Heart left ventricle (tissue), 16 donors: ENCODE measurements at regions of chr3 and their contacts with region 1.

Region 1: DNA sequence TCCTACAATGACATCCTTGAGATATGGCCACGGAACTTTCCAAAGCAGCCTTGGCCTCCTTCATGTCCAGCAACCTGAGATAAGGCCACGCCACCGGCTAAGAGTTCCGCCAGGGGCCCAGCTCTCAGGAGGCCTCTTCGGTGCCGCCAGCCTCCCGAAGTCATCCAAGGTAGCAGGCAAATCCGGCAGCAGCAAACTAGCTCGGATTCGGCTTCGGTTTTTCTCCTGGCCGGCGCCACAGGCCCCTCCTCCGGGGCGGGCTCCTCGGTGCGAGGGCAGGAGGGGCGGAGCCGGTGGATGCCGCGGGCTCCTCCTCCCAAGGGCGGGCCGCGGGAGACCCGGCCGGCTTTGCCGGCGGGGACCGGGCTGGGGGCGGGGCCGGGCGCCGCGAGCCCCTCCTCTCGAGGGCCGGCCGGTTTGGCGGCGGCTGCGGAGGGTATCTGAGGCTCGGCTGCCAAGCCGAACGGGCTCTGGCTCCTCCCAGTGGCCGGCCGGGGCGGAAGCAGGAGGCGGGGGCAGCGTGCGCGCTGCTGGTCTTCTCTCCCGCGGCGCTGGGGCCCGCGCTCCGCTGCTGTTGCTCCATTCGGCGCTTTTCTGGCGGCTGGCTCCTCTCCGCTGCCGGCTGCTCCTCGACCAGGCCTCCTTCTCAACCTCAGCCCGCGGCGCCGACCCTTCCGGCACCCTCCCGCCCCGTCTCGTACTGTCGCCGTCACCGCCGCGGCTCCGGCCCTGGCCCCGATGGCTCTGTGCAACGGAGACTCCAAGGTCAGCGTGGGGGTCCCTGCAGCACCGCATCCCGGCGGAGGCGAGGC is at the start of gene GMPS:
- DNase-seq: peak; percentile 94 to 98 (median 96)
- ATAC-seq: peak; percentile 97 to 99 (median 98)
- H3K4me3 ChIP-seq: peak within 1 kb of the TSS; percentile 71 to 100 (median 96)
- H3K27ac ChIP-seq: peak within 1 kb of the TSS; percentile 52 to 99 (median 94)
- H3K4me1 ChIP-seq: peaks cover 0 to 33% (median 18%) of the 10 kb centered on the region in 12 donors
- H3K27me3 ChIP-seq: no peaks in the 10 kb centered on the region
- CTCF ChIP-seq: peak; percentile 41 to 79 (median 57)
- POLR2A ChIP-seq: peak in 1 of 2 donors; percentile 75
- total RNA-seq, gene GMPS: 21.4 to 36.8 (median 32.3) TPM

Region 2: DNA sequence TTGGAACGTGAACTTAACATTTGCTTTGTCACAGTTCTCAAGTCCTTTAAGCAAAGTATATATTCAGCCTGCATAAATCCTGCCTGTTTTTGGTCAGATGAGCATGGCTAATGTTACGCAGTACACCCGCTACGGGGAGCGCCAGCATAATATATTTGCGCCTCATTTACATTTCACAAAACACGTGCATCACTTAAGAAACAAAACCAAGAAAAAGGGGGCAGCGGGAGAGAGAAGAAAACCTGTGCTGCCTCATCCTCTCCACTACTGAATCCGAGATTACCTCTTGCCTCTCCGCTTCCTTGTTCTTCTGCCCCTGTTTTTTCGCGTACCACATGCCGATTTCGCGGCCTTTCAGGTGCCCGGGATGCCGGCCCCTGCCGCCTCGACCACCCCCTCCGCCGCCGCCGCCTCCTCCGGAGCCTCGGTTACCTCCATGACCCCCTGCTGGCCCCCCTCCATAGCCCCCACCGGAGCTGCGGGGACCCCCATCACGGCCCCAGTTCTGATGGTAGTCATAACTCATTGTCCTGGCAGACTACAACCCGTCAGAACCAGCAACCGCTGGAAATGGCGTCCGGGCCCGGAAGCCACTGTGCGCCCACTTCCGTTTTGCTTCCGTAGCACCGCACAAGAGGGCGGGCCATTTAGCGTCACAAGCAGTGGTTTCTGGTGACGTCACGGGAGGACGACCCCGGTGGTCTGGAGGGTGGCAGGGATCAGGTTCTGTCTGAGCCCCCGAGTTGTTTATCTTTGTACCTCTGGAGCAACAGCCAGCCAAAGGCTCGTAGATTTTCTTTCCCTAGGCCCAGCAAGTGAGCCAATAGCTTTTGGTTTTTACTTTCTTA is 1546.2 kb before region 1 on chr3 and contains the start of gene DHX36:
- intact Hi-C with region 1: loop called in 1 of 10 experiments (anchors 10 kb)
- DNase-seq: peak; percentile 90 to 93 (median 90)
- ATAC-seq: peak; percentile 92 to 99 (median 98)
- H3K4me3 ChIP-seq: peak within 1 kb of the TSS; percentile 64 to 94 (median 79)
- H3K27ac ChIP-seq: peak within 1 kb of the TSS; percentile 77 to 96 (median 86)
- H3K4me1 ChIP-seq: peaks cover 0 to 51% (median 35%) of the 10 kb centered on the region in 12 donors
- H3K27me3 ChIP-seq: no peaks in the 10 kb centered on the region
- CTCF ChIP-seq: peak in 2 of 12 donors; percentile 9 to 10
- POLR2A ChIP-seq: peak in 1 of 2 donors; percentile 59
- total RNA-seq, gene DHX36: 24.9 to 50.0 (median 37.0) TPM

Region 3: DNA sequence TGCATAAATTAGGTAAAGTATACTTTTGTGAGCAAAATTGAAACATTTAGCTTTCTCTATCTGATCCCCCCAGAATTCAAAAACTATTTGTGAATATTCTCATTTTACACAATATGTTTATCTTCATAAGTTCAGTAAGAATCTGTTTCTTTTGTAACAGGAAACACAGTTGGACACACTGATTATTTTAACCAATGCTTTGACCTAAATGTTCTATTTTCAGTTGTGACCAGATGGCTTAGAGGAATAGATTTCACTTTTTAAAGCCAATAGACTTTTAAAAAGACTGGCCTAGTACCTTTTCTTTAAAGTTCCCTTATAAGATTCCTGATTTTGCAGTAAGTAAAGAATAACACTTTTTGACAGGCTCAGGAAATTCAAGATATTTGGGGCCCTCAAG is 502.8 kb before region 1 on chr3:
- intact Hi-C with region 1: loop called in 1 of 10 experiments (anchors 5 kb)
- DNase-seq: no peak
- ATAC-seq: no peak
- H3K4me3 ChIP-seq: no peak overlapping the region
- H3K27ac ChIP-seq: peak overlapping the region in 7 of 12 donors; percentile 8 to 73 (median 42)
- H3K4me1 ChIP-seq: peaks cover 0 to 54% (median 18%) of the 10 kb centered on the region in 12 donors
- H3K27me3 ChIP-seq: no peaks in the 10 kb centered on the region
- CTCF ChIP-seq: no peak
- POLR2A ChIP-seq: no peak

Region 4: DNA sequence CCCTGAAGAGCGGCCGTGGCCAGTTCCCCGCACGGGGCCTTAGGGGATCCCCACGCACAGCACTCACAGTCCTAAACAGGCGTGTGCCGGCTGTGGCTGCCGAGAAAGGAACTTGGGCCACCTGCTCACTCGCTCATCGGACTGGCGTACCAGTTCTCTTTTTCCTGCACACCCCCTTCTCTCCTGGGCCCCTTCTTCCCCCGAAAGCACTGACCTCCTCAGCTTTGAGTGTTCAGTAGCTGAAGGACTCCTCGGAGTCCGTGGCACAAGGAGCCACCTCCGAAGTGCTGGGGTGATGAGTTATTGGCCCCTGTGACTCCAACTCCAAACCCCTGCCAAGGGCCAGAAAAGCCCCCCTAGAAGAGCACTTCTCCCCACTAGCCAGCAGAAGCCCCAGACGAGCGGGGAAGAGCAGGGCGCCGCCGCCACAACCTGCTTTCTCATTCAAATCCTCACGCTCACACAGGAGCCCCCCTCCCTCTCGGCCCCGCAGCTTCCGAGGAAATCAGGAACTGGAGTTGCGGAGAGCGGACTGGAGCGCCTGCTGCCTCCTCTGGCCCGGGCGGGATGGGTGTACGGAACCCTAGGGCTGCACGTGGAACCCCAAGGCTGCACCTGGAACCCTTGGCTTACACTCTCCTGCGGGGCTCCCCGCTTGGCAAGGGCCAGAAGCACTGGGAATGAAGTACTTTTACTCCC is 125.6 kb before region 1 on chr3 and contains the start of gene PLCH1:
- intact Hi-C with region 1: loop called in 1 of 10 experiments (anchors 10 kb)
- DNase-seq: peak; percentile 47 to 72 (median 53)
- ATAC-seq: peak; percentile 79 to 92 (median 89)
- H3K4me3 ChIP-seq: peak within 1 kb of the TSS; percentile 37 to 77 (median 62)
- H3K27ac ChIP-seq: no peak within 1 kb of the TSS
- H3K4me1 ChIP-seq: peaks cover 0 to 29% (median 5%) of the 10 kb centered on the region in 12 donors
- H3K27me3 ChIP-seq: peaks cover 5 to 47% (median 16%) of the 10 kb centered on the region in 9 donors
- CTCF ChIP-seq: no peak
- POLR2A ChIP-seq: no peak
- total RNA-seq, gene PLCH1: 0.09 to 2.7 (median 0.24) TPM

Region 5: GRCh38 chr3:155805802-155806618 is 64.3 kb before region 1 on chr3 and contains the start of gene C3orf33:
- intact Hi-C with region 1: loop called in 5 of 10 experiments (anchors 1 to 5 kb)
- DNase-seq: peak; percentile 69 to 90 (median 77)
- ATAC-seq: peak; percentile 89 to 98 (median 96)
- H3K4me3 ChIP-seq: peak within 1 kb of the TSS; percentile 71 to 87 (median 78)
- H3K27ac ChIP-seq: peak within 1 kb of the TSS; percentile 72 to 93 (median 88)
- H3K4me1 ChIP-seq: peaks cover 0 to 21% (median 5%) of the 10 kb centered on the region in 12 donors
- H3K27me3 ChIP-seq: no peaks in the 10 kb centered on the region
- CTCF ChIP-seq: peak; percentile 81 to 97 (median 90)
- POLR2A ChIP-seq: no peak
- total RNA-seq, gene C3orf33: 3.4 to 8.8 (median 5.8) TPM

Region 6: DNA sequence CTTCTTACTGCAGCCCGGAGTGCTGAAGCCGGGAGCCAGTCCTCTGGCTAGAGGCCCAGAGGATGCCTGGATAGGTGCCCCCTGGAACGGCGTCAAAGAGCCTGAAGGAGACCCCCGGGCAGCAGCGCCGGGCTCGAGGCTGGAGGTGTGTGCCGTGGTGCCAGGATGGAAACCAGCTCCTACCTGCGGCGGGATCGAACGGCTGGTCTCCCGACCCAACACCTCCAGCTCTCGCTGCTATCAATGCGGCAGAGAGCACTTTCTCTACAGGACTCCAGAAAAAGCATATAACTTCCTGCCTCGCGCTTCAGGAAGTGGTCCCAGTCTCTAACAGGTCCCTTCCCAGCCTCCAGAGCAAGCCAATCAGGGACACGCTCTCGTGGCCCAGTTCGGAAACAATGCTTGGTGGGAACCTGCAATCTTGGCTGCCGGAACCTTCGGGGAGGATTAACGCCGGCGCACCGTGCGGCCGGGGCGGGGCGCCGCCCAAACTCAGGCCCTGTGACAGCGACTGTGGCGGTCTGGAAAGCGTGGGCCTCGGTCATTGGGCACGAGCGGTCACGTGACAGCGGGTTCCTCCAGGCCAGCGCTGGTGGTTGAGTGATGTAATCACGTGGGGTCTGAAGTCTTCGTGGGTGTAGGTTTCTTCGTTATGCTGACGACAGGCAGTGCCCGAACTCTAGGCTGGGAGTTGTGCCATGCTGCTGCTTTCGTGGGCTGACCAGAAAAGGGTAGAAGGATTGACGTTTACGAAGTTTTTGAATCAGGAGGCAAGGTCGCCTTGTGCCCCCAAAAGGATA is 16.0 kb before region 1 on chr3 and contains the start of gene SLC33A1:
- intact Hi-C with region 1: loop called in 6 of 10 experiments (anchors 1 to 2 kb)
- DNase-seq: peak; percentile 99 to 100 (median 99)
- ATAC-seq: peak; percentile 98 to 100 (median 98)
- H3K4me3 ChIP-seq: peak within 1 kb of the TSS; percentile 70 to 98 (median 84)
- H3K27ac ChIP-seq: peak within 1 kb of the TSS; percentile 72 to 98 (median 90)
- H3K4me1 ChIP-seq: peaks cover 11 to 48% (median 41%) of the 10 kb centered on the region in 12 donors
- H3K27me3 ChIP-seq: no peaks in the 10 kb centered on the region
- CTCF ChIP-seq: no peak
- POLR2A ChIP-seq: peak in 1 of 2 donors; percentile 67
- total RNA-seq, gene SLC33A1: 14.6 to 30.5 (median 21.6) TPM

Region 7: GRCh38 chr3:156090126-156090525 is 219.8 kb after region 1 on chr3:
- intact Hi-C with region 1: no loop called
- DNase-seq: no peak
- ATAC-seq: no peak
- H3K4me3 ChIP-seq: no peak overlapping the region
- H3K27ac ChIP-seq: no peak overlapping the region
- H3K4me1 ChIP-seq: peaks cover 0 to 5% (median 0%) of the 10 kb centered on the region in 12 donors
- H3K27me3 ChIP-seq: no peaks in the 10 kb centered on the region
- CTCF ChIP-seq: no peak
- POLR2A ChIP-seq: no peak